ENCODE measurements at regions of chr7 and their contacts with region 1.

Region 1: GRCh38 chr7:87886875-87887274 is 10.6 kb downstream of the DBF4 start:
- DNase-seq: no peak
- H3K4me3 ChIP-seq: no peak overlapping the region
- H3K27ac ChIP-seq: no peak overlapping the region
- H3K4me1 ChIP-seq: no peaks in the 10 kb centered on the region
- H3K27me3 ChIP-seq: no peaks in the 10 kb centered on the region
- CTCF ChIP-seq: peak; percentile 37 to 54 (median 43)
- EP300 ChIP-seq: no peak
- POLR2A ChIP-seq: no peak

Region 2: DNA sequence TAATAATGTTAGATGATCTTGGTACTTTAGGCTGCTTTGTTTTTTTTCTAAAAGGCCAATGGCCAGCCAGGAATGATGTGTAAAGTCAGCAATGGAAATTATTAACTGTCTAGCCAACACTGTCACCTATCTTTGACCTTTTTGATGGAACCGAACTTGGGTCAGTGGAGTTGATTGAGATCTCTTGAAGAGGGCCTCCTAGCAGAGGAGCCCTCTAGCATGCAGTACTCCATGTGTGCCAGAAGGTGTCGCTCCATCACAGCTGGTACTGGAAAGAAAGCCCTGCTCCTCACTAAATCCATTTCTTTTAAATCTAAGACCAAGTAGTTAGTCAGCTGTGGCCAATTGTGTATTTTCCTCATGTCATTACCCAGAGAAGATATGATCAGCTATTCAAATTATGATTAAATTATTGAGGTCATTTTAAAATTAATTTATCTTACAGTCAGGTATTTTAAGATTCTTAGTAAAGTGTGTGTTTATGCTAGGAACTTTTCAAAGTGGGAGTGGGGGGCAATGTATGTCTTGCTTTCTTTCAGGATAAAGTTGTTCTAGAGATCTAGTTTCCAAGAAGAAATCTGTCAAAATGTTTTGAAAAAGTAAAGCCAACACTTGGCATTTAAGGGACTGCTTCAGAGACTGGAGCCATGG is 574.5 kb before region 1 on chr7:
- intact Hi-C with region 1: loop called (anchors 5 kb)
- DNase-seq: no peak
- H3K4me3 ChIP-seq: no peak overlapping the region
- H3K27ac ChIP-seq: no peak overlapping the region
- H3K4me1 ChIP-seq: peaks cover 0 to 6% (median 2%) of the 10 kb centered on the region in 4 donors
- H3K27me3 ChIP-seq: no peaks in the 10 kb centered on the region
- CTCF ChIP-seq: peak; percentile 95 to 98 (median 98)
- EP300 ChIP-seq: no peak
- POLR2A ChIP-seq: no peak

Region 3: DNA sequence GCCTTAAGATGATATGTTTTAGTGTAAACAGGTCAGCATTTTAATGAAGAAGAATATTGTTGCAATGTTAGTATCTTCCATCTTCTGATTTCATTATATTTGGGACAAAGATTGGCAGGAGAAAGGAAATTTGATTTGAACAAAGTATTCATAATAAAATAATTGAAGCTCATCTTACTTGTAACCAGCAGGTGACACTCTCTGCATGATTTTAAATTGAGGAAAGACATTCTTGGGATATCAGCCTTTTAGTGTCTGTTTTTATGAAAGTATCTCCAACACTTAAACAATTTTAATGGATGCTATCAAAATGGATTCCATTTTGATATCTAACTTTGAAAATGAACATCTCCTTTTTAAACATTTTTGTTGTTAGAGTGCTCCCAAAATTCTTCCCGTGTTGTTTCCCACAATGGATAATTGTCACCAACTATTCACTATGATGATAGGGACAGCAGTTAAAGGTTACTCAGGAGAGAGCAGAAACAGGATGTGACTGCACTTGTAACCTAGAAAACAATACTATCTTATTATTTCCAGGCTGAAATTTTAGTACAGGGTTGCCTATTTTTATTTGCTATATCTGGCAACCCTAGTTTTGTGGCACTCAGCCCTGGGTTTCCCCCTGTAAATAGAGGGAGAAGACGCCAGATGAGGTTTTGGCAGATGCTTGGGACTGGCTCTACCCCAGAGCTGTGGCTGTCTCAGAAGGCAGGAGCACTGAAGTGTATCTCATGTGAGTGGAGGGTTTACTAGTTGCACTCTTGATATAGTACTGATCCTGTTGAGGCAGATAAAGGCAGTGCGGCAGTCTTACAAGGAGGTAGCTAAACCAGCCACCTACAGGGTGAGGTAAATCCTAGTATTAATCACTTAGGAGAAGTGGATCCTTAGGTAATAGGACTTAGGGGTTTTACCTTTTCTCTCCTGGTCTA is 380.4 kb before region 1 on chr7:
- intact Hi-C with region 1: loop called (anchors 5 kb)
- DNase-seq: no peak
- H3K4me3 ChIP-seq: no peak overlapping the region
- H3K27ac ChIP-seq: no peak overlapping the region
- H3K4me1 ChIP-seq: no peaks in the 10 kb centered on the region
- H3K27me3 ChIP-seq: no peaks in the 10 kb centered on the region
- CTCF ChIP-seq: peak in 1 of 3 experiments; percentile 34
- EP300 ChIP-seq: no peak
- POLR2A ChIP-seq: no peak

Region 4: GRCh38 chr7:87797798-87798403 is 89.0 kb before region 1 on chr7:
- intact Hi-C with region 1: loop called (anchors 5 kb)
- DNase-seq: no peak
- H3K4me3 ChIP-seq: no peak overlapping the region
- H3K27ac ChIP-seq: no peak overlapping the region
- H3K4me1 ChIP-seq: no peaks in the 10 kb centered on the region
- H3K27me3 ChIP-seq: no peaks in the 10 kb centered on the region
- CTCF ChIP-seq: peak; percentile 25 to 50 (median 40)
- EP300 ChIP-seq: no peak
- POLR2A ChIP-seq: no peak

Measured in esophagus muscularis mucosa (tissue), 4 donors.